ENCODE measurements at regions of chr5 and their contacts with region 1.

Region 1: GRCh38 chr5:59673438-59674058 is 220.0 kb downstream of the PDE4D start:
- DNase-seq: no peak
- ATAC-seq: no peak
- H3K4me3 ChIP-seq: no peak overlapping the region
- H3K27ac ChIP-seq: no peak overlapping the region
- H3K4me1 ChIP-seq: no peaks in the 10 kb centered on the region
- H3K27me3 ChIP-seq: no peaks in the 10 kb centered on the region

Region 2: GRCh38 chr5:59390074-59390659 is 283.4 kb before region 1 on chr5:
- intact Hi-C with region 1: loop called (anchors 2 to 5 kb)
- DNase-seq: no peak
- ATAC-seq: no peak
- H3K4me3 ChIP-seq: no peak overlapping the region
- H3K27ac ChIP-seq: no peak overlapping the region
- H3K4me1 ChIP-seq: no peaks in the 10 kb centered on the region
- H3K27me3 ChIP-seq: no peaks in the 10 kb centered on the region

Region 3: GRCh38 chr5:59506285-59506877 is 167.2 kb before region 1 on chr5:
- intact Hi-C with region 1: loop called (anchors 5 kb)
- DNase-seq: no peak
- ATAC-seq: no peak
- H3K4me3 ChIP-seq: no peak overlapping the region
- H3K27ac ChIP-seq: no peak overlapping the region
- H3K4me1 ChIP-seq: no peaks in the 10 kb centered on the region
- H3K27me3 ChIP-seq: no peaks in the 10 kb centered on the region